ENCODE measurements at regions of chr1 and their contacts with region 1.

Region 1: GRCh38 chr1:82819234-82819633 is 1018.5 kb downstream of the ADGRL2 start:
- DNase-seq: no peak
- H3K4me3 ChIP-seq: peak overlapping the region in 1 of 3 donors; percentile 18
- H3K27ac ChIP-seq: no peak overlapping the region
- H3K4me1 ChIP-seq: no peaks in the 10 kb centered on the region
- H3K27me3 ChIP-seq: no peaks in the 10 kb centered on the region
- CTCF ChIP-seq: no peak
- POLR2A ChIP-seq: no peak

Region 2: GRCh38 chr1:82762829-82763532 is 56.3 kb before region 1 on chr1:
- intact Hi-C with region 1: no loop called
- DNase-seq: no peak
- H3K4me3 ChIP-seq: no peak overlapping the region
- H3K27ac ChIP-seq: no peak overlapping the region
- H3K4me1 ChIP-seq: no peaks in the 10 kb centered on the region
- H3K27me3 ChIP-seq: no peaks in the 10 kb centered on the region
- CTCF ChIP-seq: no peak
- POLR2A ChIP-seq: no peak

Region 3: DNA sequence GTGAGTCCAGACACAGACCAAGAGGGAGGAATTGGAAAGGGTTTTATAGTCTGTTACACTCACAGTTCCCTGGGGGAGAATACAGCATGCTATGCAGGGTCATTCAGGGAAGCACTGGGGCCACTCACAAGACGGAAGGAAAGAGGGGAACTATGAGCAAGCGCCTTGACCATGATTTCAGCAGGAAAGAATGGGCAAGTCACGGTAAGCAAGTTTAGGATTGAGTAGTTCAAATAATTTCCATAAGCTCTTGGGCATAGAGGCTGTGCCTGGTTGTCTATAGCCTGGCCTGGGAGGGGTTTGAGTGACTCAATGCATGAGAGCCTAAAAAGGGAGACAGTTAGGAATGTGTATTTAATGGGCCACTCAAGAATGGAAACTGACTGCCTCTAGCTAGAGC is 1003.0 kb after region 1 on chr1:
- intact Hi-C with region 1: loop called (anchors 5 kb)
- DNase-seq: no peak
- H3K4me3 ChIP-seq: no peak overlapping the region
- H3K27ac ChIP-seq: no peak overlapping the region
- H3K4me1 ChIP-seq: no peaks in the 10 kb centered on the region
- H3K27me3 ChIP-seq: no peaks in the 10 kb centered on the region
- CTCF ChIP-seq: no peak
- POLR2A ChIP-seq: no peak

Measured in breast epithelium (tissue), 4 donors.